Psoas muscle (tissue), 8 donors: ENCODE measurements at regions of chr1 and their contacts with region 1.

Region 1: DNA sequence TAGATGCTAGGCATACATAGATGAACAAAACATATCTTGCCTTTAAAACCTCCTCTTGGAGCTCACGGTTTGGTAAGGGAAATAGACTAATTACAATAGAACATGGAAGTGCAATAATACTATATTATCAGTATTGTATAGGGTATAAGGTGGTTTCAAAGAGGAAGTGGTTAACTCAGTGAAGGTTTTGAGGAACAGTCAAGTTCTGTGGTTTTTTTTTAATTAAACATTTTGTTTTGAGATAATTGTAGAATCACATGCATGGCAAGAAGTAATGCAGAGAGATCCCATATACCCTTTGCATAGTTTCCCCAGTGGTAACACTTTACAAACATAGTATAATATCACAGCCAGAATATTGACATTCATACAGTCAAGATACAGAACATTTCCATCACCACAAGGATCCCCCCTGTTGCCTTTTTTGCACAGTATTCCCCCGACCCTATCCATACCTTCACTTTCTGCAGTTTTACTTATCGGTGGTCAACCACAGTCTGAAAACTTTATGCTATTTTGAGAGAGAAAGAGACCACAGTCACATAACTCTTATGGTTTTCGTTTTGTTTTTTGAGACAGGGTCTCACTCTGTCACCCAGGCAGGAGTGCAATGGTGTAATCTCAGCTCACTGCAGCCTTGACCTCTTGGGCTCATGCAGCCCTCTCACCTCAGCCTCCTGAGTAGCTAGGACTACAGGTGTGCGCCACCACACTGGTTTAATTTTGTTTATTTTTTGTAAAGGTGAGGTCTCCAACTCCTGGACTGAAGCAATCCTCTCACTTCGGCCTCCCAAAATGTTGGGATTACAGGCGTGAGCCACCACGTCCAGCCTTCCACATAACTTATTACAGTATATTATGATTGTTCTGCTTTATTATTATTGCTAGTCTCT is 60.5 kb upstream of the KIAA1614 start:
- DNase-seq: no peak
- ATAC-seq: no peak
- H3K4me3 ChIP-seq: no peak overlapping the region
- H3K27ac ChIP-seq: no peak overlapping the region
- H3K4me1 ChIP-seq: no peaks in the 10 kb centered on the region
- H3K27me3 ChIP-seq: no peaks in the 10 kb centered on the region
- CTCF ChIP-seq: no peak

Region 2: DNA sequence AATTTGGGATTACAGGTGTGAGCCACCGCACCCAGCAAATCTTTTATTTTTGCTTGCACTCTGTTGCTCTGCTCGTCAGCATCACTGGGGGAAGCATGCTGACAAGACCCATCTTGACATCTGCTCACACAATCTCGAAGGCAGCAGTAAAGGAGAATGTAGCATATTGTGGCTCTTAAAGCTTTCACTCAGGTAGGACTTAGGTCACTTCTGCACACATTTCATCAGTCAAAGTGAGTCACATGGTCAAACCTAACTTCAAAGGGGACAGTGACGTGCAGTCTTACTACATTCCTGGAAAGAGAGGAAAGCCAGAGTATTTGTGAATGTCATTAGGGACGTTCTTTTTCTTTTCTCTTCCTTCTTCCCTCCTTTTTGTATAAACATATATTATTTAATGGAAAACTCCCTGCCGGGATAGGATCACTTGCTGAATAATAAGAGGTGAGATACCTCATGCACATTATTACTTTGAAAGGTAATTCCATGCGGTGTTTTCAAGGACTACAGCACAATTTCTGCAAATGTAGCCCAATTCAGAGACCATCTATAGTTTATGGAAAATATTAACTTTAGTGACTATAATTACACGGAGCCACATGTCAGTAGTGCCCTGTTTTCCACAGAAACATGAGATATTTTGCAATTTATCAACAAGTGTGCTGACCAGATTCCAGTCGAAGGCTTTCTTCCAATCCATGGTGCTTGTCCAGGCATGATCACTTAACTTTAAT is 330.6 kb before region 1 on chr1:
- intact Hi-C with region 1: loop called in 1 of 2 experiments (anchors 5 kb)
- DNase-seq: no peak
- ATAC-seq: peak in 2 of 4 donors; percentile 26 to 40
- H3K4me3 ChIP-seq: no peak overlapping the region
- H3K27ac ChIP-seq: no peak overlapping the region
- H3K4me1 ChIP-seq: peaks cover 16% of the 10 kb centered on the region
- H3K27me3 ChIP-seq: no peaks in the 10 kb centered on the region
- CTCF ChIP-seq: no peak